ENCODE measurements at regions of chr20 and their contacts with region 1.

Region 1: GRCh38 chr20:41249406-41250281 is 67.9 kb downstream of the ZHX3 start:
- DNase-seq: peak; percentile 71 to 73
- H3K4me3 ChIP-seq: no peak overlapping the region
- H3K4me3 Mint-ChIP-seq: no peak overlapping the region
- H3K27ac Mint-ChIP-seq: no peak overlapping the region
- H3K4me1 ChIP-seq: no peaks in the 10 kb centered on the region
- H3K4me1 Mint-ChIP-seq: no peaks in the 10 kb centered on the region
- H3K27me3 ChIP-seq: no peaks in the 10 kb centered on the region
- H3K27me3 Mint-ChIP-seq: no peaks in the 10 kb centered on the region
- CTCF ChIP-seq: peak; percentile 50 to 57

Region 2: GRCh38 chr20:41086402-41087338 is 163.0 kb before region 1 on chr20:
- CTCF ChIA-PET with region 1: no interaction called
- POLR2A ChIA-PET with region 1: no interaction called
- intact Hi-C with region 1: no loop called
- DNase-seq: no peak
- H3K4me3 ChIP-seq: no peak overlapping the region
- H3K4me3 Mint-ChIP-seq: no peak overlapping the region
- H3K27ac Mint-ChIP-seq: no peak overlapping the region
- H3K4me1 ChIP-seq: no peaks in the 10 kb centered on the region
- H3K4me1 Mint-ChIP-seq: peaks cover 7% of the 10 kb centered on the region
- H3K27me3 ChIP-seq: no peaks in the 10 kb centered on the region
- H3K27me3 Mint-ChIP-seq: no peaks in the 10 kb centered on the region
- CTCF ChIP-seq: no peak

Region 3: DNA sequence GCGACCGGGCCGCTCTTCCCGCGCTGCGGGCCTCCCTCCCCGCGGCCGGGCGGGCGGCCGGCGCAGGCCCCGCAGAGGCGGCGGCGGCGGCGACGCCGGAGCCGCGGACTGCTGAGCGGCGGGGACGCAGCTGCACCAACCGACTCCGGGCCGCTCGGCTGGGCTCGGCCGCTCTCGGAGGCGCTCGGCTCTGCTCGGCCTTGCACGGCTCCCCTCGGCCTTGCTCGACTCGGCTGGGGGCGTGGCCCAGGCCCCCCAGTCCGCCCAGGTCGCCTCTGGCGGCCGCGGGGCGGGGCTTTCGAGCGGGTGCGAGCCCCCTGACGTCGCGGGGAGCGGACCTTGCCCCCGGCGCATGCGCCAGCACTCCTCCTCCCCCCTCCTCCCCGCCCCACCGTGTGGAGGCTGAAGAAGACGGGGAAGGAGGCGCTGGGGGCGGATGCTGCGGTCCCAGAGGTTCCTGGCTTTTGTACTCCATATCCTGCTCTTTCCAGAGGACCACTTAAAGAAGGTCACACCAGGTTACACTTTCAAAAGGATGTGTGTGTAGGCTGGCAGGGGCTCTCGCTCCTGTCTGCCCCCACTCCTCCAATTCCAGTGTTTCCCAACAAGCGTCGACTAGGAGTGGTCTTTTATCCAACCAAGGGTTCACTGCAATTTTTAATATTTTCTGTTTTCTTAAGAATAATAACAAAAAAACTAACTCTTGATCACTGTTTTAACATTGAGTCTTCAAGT is 68.1 kb after region 1 on chr20 and contains the start of gene ZHX3:
- CTCF ChIA-PET with region 1: interaction called, 6 read pairs
- POLR2A ChIA-PET with region 1: no interaction called
- intact Hi-C with region 1: loop called (anchors 2 kb)
- DNase-seq: peak; percentile 100
- H3K4me3 ChIP-seq: peak within 1 kb of the TSS; percentile 75
- H3K4me3 Mint-ChIP-seq: peak within 1 kb of the TSS; percentile 84
- H3K27ac Mint-ChIP-seq: peak within 1 kb of the TSS; percentile 10
- H3K4me1 ChIP-seq: peaks cover 18% of the 10 kb centered on the region
- H3K4me1 Mint-ChIP-seq: peaks cover 30% of the 10 kb centered on the region
- H3K27me3 ChIP-seq: no peaks in the 10 kb centered on the region
- H3K27me3 Mint-ChIP-seq: no peaks in the 10 kb centered on the region
- CTCF ChIP-seq: no peak
- total RNA-seq, gene ZHX3: 22.9 and 24.6 TPM in 2 replicates

Region 4: DNA sequence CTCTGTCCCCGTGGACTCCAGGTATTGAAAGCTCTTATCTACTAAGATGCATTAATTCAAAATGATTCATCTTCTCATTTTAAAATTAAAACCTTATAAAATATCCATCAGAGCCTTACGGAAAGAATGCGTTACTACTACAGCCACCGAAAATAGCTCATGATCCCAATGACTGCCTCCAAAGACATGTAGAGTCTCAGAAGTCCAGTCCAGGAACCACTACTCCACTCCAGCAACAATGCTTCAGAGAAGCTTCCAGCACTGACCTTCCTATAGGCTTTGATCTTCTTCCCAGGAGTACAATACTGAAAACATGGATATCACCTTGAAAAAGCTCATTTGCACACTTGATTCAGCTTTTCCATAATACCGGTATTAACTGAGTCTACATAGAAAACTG is 274.2 kb after region 1 on chr20:
- CTCF ChIA-PET with region 1: no interaction called
- POLR2A ChIA-PET with region 1: no interaction called
- intact Hi-C with region 1: no loop called
- DNase-seq: no peak
- H3K4me3 ChIP-seq: no peak overlapping the region
- H3K4me3 Mint-ChIP-seq: no peak overlapping the region
- H3K27ac Mint-ChIP-seq: no peak overlapping the region
- H3K4me1 ChIP-seq: no peaks in the 10 kb centered on the region
- H3K4me1 Mint-ChIP-seq: no peaks in the 10 kb centered on the region
- H3K27me3 ChIP-seq: no peaks in the 10 kb centered on the region
- H3K27me3 Mint-ChIP-seq: no peaks in the 10 kb centered on the region
- CTCF ChIP-seq: no peak